ENCODE measurements at regions of chr1 and their contacts with region 1.

Region 1: GRCh38 chr1:22025368-22026155 is 24.1 kb downstream of the CELA3A start:
- DNase-seq: peak; percentile 76 to 87 (median 76)
- H3K4me3 ChIP-seq: peak overlapping the region; percentile 72 to 96 (median 93)
- H3K4me3 Mint-ChIP-seq: peak overlapping the region; percentile 95
- H3K27ac ChIP-seq: peak overlapping the region; percentile 95 to 99
- H3K27ac Mint-ChIP-seq: peak overlapping the region; percentile 91 to 98 (median 97)
- H3K4me1 ChIP-seq: peaks cover 21 to 42% of the 10 kb centered on the region in 2 donors
- H3K4me1 Mint-ChIP-seq: peaks cover 38% of the 10 kb centered on the region
- H3K27me3 ChIP-seq: no peaks in the 10 kb centered on the region
- H3K27me3 Mint-ChIP-seq: peaks cover 0 to 3% (median 2%) of the 10 kb centered on the region in 3 donors
- CTCF ChIP-seq: no peak

Region 2: DNA sequence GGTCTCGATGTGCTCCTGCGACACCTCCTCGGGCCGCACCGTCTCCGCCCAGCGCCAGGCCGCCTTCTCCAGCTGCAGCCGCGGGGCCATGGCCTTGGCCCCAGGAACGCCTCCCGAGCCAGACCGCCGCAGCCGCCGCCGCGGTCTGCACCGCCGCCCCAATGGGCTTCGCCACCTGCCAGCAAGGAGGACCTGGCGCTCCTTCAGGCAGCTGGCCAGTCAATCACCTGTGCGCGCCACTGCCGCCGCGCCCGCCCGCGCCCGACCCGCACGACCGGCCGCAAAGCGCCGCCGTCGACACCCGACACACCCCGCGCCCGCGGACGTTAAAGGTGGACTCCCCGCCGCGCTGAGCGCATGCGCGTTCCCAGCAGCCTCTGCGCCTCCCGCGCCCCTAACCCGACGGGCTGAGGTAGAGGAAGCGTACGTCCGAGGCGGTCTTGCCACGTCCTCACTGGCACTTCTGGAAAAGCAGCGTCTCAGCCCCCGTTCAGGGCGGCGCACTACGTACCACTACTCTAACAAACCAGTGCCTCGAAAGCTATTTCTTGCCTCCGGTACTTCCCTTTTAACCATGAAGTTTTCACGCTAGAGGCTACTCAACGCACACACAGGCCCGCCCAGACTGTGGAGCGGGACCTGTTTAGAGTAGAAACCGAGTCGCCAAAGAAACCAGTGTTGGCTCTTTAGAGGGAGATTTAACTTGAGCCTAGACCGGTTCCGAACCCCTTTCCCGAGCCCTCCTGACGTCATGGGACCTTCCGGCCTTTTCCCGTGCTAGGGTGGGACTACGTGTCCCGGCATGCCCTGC is 242.5 kb before region 1 on chr1 and contains the start of gene USP48:
- intact Hi-C with region 1: loop called in 1 of 2 experiments (anchors 10 kb)
- DNase-seq: peak; percentile 94 to 96 (median 95)
- H3K4me3 ChIP-seq: peak within 1 kb of the TSS; percentile 83 to 92 (median 84)
- H3K4me3 Mint-ChIP-seq: peak within 1 kb of the TSS; percentile 95 to 99
- H3K27ac ChIP-seq: peak within 1 kb of the TSS; percentile 99 to 100
- H3K27ac Mint-ChIP-seq: peak within 1 kb of the TSS; percentile 100
- H3K4me1 ChIP-seq: peaks cover 31 to 32% of the 10 kb centered on the region in 2 donors
- H3K4me1 Mint-ChIP-seq: peaks cover 35% of the 10 kb centered on the region
- H3K27me3 ChIP-seq: no peaks in the 10 kb centered on the region
- H3K27me3 Mint-ChIP-seq: peaks cover 0 to 4% (median 0%) of the 10 kb centered on the region in 3 donors
- CTCF ChIP-seq: no peak
- polyA plus RNA-seq, gene USP48: 26.5 to 40.2 (median 34.3) TPM

Region 3: DNA sequence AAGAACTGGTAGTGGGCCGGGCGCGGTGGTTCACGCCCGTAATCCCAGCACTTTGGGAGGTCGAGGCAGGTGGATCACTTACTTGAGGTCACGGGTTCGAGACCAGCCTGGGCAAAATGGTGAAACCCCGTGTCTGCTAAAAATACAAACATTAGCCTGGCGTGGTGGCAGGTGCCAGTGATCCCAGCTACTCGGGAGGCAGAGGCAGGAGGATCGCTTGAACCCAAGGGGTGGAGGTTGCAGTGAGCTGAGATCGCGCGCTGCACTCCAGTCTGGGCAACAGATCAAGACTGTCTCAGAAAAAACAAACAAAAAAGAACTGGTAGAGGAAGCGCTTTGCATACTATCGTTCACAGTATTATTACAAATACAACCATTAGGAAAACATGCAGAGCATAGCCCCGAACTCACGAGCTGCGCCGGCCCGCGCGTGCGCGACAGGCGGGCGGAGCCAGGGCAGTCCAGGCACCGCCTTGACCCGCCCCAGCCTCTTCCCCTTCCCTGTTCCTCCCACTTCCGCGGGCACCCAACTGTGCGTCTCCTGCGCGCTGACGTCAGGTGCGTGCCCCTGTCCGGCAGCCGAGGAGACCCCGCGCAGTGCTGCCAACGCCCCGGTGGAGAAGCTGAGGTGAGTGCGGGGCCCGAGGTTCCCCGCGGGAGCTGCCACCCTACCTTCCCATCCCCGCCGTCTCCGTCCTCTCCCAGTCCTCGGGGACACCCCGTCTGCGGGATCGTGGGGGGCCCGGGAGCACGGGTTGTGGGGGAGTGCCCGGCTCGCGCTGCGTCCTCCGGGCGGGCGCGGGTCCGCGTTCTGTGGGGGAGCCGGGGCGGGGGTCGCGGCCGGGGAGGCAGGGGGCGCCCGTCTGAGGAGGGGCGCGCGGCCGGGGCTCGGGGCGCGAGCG is 26.8 kb after region 1 on chr1 and contains the start of gene CDC42:
- intact Hi-C with region 1: loop called in 1 of 2 experiments (anchors 5 kb)
- DNase-seq: peak; percentile 94 to 97 (median 96)
- H3K4me3 ChIP-seq: peak within 1 kb of the TSS; percentile 88 to 99 (median 99)
- H3K4me3 Mint-ChIP-seq: peak within 1 kb of the TSS; percentile 91 to 96
- H3K27ac ChIP-seq: peak within 1 kb of the TSS; percentile 92 to 95
- H3K27ac Mint-ChIP-seq: peak within 1 kb of the TSS; percentile 93 to 98 (median 95)
- H3K4me1 ChIP-seq: peaks cover 69 to 73% of the 10 kb centered on the region in 2 donors
- H3K4me1 Mint-ChIP-seq: peaks cover 65% of the 10 kb centered on the region
- H3K27me3 ChIP-seq: no peaks in the 10 kb centered on the region
- H3K27me3 Mint-ChIP-seq: peaks cover 0 to 8% (median 0%) of the 10 kb centered on the region in 3 donors
- CTCF ChIP-seq: no peak
- polyA plus RNA-seq, gene CDC42: 210 to 731 (median 606) TPM

Region 4: DNA sequence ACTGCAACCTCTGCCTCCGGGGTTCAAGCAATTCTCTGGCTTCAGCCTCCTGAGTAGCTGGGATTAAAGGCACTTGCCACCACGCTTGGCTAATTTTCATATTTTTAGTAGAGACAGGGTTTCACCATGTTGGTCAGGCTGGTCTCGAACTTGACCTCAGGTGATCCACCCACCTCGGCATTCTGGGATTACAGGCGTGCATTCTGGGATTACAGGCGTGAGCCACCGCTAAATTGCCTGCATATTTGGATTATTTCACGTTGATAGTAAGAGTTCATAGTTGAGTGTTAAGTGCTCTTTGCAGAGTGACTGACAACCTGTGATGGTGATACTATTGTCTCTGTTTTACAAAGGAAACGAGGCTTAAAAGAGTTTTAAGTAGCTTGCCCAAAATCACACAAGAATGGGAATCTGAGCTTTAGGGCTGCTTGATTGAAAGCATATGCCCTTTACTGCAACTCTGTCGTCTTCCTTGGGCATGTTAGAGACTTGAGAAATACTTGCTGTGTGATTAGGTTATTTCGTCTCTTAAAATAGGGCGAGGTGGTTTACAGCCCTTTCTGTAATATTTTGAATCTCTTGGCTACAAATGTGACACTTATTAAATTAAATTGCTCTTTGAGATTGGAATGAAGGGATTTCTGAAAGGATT is 39.3 kb after region 1 on chr1:
- intact Hi-C with region 1: loop called in 1 of 2 experiments (anchors 5 kb)
- DNase-seq: no peak
- H3K4me3 ChIP-seq: no peak overlapping the region
- H3K4me3 Mint-ChIP-seq: no peak overlapping the region
- H3K27ac ChIP-seq: peak overlapping the region in 1 of 2 donors; percentile 26
- H3K27ac Mint-ChIP-seq: peak overlapping the region in 3 of 7 donors; percentile 2 to 78 (median 21)
- H3K4me1 ChIP-seq: peaks cover 16 to 37% of the 10 kb centered on the region in 2 donors
- H3K4me1 Mint-ChIP-seq: peaks cover 76% of the 10 kb centered on the region
- H3K27me3 ChIP-seq: no peaks in the 10 kb centered on the region
- H3K27me3 Mint-ChIP-seq: no peaks in the 10 kb centered on the region
- CTCF ChIP-seq: no peak

Region 5: DNA sequence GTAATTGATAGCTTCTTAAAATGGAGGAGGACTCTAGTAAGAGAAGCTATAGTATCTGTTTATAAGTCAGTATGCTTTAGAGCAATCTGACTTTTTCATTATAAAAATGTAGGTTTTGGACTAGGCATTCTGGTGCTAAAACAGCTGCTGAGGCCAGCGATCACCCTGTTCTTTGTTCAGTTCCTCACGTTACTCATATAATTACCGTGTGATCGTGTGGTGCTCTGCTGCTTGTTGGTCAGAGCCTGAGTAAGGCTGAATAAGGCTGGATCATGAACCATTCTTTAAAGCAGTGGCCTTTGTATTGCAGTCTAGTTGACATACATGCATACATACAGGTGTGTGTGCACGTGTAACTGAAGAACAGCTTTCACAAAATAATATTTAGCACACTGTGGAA is 52.2 kb after region 1 on chr1:
- intact Hi-C with region 1: loop called in 1 of 2 experiments (anchors 5 kb)
- DNase-seq: no peak
- H3K4me3 ChIP-seq: no peak overlapping the region
- H3K4me3 Mint-ChIP-seq: no peak overlapping the region
- H3K27ac ChIP-seq: peak overlapping the region in 1 of 2 donors; percentile 61
- H3K27ac Mint-ChIP-seq: peak overlapping the region in 4 of 7 donors; percentile 6 to 75 (median 20)
- H3K4me1 ChIP-seq: peaks cover 42 to 49% of the 10 kb centered on the region in 2 donors
- H3K4me1 Mint-ChIP-seq: peaks cover 62% of the 10 kb centered on the region
- H3K27me3 ChIP-seq: no peaks in the 10 kb centered on the region
- H3K27me3 Mint-ChIP-seq: no peaks in the 10 kb centered on the region
- CTCF ChIP-seq: no peak

Region 6: DNA sequence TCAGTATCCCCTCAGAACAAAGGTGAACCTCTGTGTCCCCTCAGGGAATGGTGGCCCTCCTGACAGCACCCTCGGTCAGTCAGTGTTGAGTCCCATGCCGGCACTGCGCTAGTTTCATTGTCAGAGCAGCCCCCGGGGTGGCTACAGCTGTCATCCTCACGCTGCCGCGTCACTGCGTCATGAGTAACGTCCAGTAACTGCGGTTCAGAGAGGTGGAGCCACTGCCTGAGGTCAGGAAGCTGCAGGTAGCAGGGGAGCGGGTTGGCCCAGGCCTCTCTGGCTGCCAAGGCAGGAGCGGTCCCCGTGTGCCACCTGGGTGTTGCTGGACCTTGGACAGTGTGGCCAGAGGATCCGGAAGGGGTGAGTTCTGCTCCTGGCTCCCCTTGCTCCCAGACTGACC is 137.6 kb after region 1 on chr1:
- intact Hi-C with region 1: no loop called
- DNase-seq: no peak
- H3K4me3 ChIP-seq: no peak overlapping the region
- H3K4me3 Mint-ChIP-seq: no peak overlapping the region
- H3K27ac ChIP-seq: no peak overlapping the region
- H3K27ac Mint-ChIP-seq: no peak overlapping the region
- H3K4me1 ChIP-seq: no peaks in the 10 kb centered on the region
- H3K4me1 Mint-ChIP-seq: no peaks in the 10 kb centered on the region
- H3K27me3 ChIP-seq: no peaks in the 10 kb centered on the region
- H3K27me3 Mint-ChIP-seq: peaks cover 3 to 11% (median 8%) of the 10 kb centered on the region in 3 donors
- CTCF ChIP-seq: no peak